Motor neuron (in vitro differentiated cells): ENCODE measurements at regions of chr4 and their contacts with region 1.

Region 1: DNA sequence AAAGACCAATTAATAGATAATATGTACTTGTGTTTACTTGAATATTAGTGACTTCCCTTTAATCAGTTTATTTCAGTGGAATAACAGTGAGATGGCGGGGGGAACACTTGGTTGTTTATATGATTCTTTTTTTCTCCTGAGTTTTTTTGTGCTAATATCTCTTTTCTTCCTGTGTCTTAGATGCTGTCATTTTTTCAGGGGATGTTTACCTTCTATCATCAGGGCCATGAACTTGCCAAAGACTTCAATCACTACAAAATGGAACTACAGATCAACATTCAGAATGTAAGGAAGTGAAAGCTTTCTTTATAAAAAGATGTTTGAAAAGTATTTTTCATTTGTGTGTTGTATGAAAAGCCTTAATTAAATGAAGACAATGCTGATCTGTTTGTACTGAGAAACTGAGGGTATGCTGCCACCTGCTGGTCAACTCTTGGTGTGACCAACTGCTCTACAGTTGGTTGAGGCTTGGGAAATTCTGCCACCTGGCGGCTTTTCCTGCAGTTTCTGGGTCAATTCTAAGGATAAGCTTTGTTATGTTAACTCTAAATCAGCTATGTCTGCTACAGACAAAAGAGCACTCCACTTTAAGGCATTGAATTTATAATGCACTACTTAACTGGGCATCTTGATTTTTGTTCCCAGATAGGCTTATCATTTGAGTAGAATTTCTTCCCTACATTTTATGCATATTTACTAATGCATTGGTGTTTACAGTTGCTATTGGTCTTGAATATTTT is 134.8 kb downstream of the ARHGAP10 start:
- ATAC-seq: peak; percentile 96 to 100 (median 98)
- H3K4me3 ChIP-seq: no peak overlapping the region
- H3K27ac ChIP-seq: no peak overlapping the region
- H3K4me1 ChIP-seq: no peaks in the 10 kb centered on the region

Region 2: GRCh38 chr4:147707865-147708672 is 158.6 kb before region 1 on chr4:
- in situ Hi-C with region 1: loop called in 4 of 9 experiments (anchors 10 to 25 kb)
- ATAC-seq: peak in 4 of 8 experiments; percentile 47 to 77 (median 72)
- H3K4me3 ChIP-seq: no peak overlapping the region
- H3K27ac ChIP-seq: no peak overlapping the region
- H3K4me1 ChIP-seq: no peaks in the 10 kb centered on the region

Region 3: GRCh38 chr4:147714575-147715401 is 151.9 kb before region 1 on chr4:
- in situ Hi-C with region 1: loop called in 4 of 9 experiments (anchors 10 to 25 kb)
- ATAC-seq: peak in 2 of 8 experiments; percentile 67 to 92
- H3K4me3 ChIP-seq: no peak overlapping the region
- H3K27ac ChIP-seq: no peak overlapping the region
- H3K4me1 ChIP-seq: no peaks in the 10 kb centered on the region

Region 4: DNA sequence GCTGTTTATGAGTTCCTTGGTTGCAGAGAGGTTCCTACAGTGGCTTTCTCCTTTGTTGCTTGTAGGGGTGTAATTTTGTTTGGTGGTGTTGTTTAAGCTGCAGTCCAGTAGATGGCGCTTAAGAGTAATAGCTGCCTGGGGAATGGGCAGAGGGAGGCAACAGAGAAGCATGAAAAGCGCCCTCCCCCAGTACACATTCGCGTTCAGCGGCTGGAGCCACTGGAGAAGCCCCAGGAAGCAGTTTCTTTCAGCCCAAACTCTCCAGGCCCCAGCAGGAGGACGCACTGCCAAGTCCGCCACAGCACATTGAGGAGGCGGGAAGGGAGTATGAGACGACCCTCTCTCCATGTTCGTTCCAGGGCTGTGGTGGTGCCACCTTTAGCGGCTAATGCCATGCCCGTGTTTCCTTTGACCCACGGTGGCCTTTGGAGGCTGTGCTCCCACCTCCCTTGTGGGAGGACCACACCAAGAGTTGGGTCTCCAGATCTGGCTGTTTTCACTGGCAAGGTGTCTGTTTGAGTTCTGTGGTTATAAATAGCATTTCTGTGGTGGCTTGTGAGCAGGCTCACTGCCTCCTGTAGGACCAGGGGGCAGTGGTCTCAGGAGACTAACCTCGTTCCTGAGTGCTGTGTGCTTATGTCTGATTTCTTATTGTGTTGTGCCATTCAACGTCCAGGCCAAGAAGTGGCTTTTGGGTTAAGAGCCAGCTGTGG is 117.5 kb after region 1 on chr4:
- in situ Hi-C with region 1: no loop called
- ATAC-seq: peak in 6 of 8 experiments; percentile 10 to 69 (median 48)
- H3K4me3 ChIP-seq: no peak overlapping the region
- H3K27ac ChIP-seq: no peak overlapping the region
- H3K4me1 ChIP-seq: no peaks in the 10 kb centered on the region